Right ventricle myocardium superior (tissue), 1 donor: ENCODE measurements at regions of chr15 and their contacts with region 1.

Region 1: GRCh38 chr15:84023636-84024035 is 211.9 kb upstream of the GOLGA6L4 start:
- DNase-seq: no peak
- ATAC-seq: no peak

Region 2: GRCh38 chr15:83734487-83734886 is 289.1 kb before region 1 on chr15:
- intact Hi-C with region 1: loop called (anchors 5 kb)
- DNase-seq: no peak
- ATAC-seq: peak; percentile 49

Region 3: GRCh38 chr15:84079885-84080777 is 56.5 kb after region 1 on chr15:
- intact Hi-C with region 1: no loop called
- DNase-seq: peak; percentile 53
- ATAC-seq: peak; percentile 56